OCI-LY7 (cell line): ENCODE measurements at regions of chr3 and their contacts with region 1.

Region 1: DNA sequence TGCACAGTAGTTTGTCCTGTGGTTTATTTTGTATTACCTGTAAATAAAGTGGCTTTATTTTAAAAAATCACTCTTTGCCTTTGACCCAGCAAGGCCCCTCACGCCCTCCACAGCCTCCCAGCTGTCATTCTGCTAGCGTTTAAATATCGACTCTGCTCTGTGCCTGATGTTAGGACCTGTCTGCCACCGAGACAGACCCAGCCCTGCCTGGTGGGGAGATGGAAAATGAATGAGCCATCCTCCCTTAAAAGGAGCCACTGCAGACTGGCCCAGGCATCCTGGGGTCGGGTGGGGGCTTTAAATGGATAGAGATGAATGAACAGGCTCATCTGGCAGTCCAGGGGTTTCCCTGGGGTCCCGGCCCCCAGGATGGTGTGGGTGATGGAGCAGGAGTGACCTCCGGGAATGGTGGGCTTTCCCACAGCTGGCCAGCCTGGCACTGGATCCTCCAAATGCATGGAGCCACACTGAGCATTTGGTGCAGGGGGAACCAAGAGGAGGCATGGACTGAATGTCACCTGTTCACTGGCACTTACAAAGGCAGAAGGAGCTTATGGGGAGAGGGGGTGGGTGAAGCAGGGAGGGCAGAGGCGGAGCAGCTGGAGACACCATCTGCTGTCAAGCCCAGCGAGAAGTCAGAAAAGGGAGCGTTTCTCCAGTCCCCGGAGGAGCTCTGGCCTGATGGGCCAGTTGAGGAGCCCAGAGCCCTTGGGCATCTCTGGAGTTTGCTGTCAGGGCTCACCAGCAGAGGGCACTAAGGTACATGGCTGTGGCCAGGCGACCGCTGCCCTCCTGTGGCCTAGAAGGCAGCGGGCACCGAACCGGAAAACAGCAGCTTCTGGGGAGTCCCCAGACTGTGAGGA is 11.9 kb downstream of the GRM2 start:
- DNase-seq: peak; percentile 64
- H3K4me3 ChIP-seq: no peak overlapping the region
- H3K27ac ChIP-seq: no peak overlapping the region
- H3K4me1 ChIP-seq: peaks cover 10% of the 10 kb centered on the region
- CTCF ChIP-seq: peak; percentile 77

Region 2: GRCh38 chr3:51682079-51682478 is 36.7 kb before region 1 on chr3:
- CTCF ChIA-PET with region 1: no interaction called
- POLR2A ChIA-PET with region 1: no interaction called
- intact Hi-C with region 1: no loop called
- DNase-seq: peak; percentile 87
- H3K4me3 ChIP-seq: no peak overlapping the region
- H3K27ac ChIP-seq: peak overlapping the region; percentile 23
- H3K4me1 ChIP-seq: peaks cover 48% of the 10 kb centered on the region
- CTCF ChIP-seq: peak; percentile 88

Region 3: DNA sequence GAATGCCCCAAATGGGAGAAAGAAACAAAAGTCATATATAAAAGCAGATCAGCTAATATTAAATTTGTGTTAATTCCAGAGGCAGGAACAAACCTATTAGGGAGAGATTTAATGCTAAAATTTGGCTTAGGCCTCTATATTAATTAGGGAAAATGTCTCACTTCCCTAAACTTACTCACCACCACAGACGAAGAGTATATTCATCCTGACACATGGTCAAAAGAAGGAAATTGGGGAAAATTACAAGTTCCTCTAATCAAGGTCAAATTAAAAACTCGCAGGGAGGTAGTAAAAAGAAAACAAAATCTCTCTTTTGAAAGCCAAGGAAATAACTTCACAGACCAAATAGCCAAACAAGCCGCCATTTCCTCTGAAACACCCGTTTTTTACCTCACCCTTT is 20.3 kb after region 1 on chr3:
- CTCF ChIA-PET with region 1: no interaction called
- POLR2A ChIA-PET with region 1: no interaction called
- intact Hi-C with region 1: no loop called
- DNase-seq: no peak
- H3K4me3 ChIP-seq: no peak overlapping the region
- H3K27ac ChIP-seq: no peak overlapping the region
- H3K4me1 ChIP-seq: peaks cover 4% of the 10 kb centered on the region
- CTCF ChIP-seq: no peak

Region 4: GRCh38 chr3:51799879-51800749 is 81.3 kb after region 1 on chr3:
- CTCF ChIA-PET with region 1: interaction called, 7 read pairs
- POLR2A ChIA-PET with region 1: no interaction called
- intact Hi-C with region 1: loop called (anchors 1 kb)
- DNase-seq: peak; percentile 62
- H3K4me3 ChIP-seq: no peak overlapping the region
- H3K27ac ChIP-seq: no peak overlapping the region
- H3K4me1 ChIP-seq: no peaks in the 10 kb centered on the region
- CTCF ChIP-seq: peak; percentile 97